Thyroid gland (tissue), 4 donors: ENCODE measurements at regions of chr2 and their contacts with region 1.

Region 1: GRCh38 chr2:10434886-10435819 is 13.0 kb downstream of the ODC1 start:
- DNase-seq: peak; percentile 70
- H3K4me3 ChIP-seq: no peak overlapping the region
- H3K27ac ChIP-seq: no peak overlapping the region
- H3K4me1 ChIP-seq: peaks cover 5 to 10% of the 10 kb centered on the region in 2 donors
- H3K27me3 ChIP-seq: no peaks in the 10 kb centered on the region
- CTCF ChIP-seq: peak; percentile 88 to 98 (median 94)
- POLR2A ChIP-seq: no peak

Region 2: GRCh38 chr2:9799665-9800632 is 635.2 kb before region 1 on chr2:
- intact Hi-C with region 1: loop called (anchors 10 kb)
- DNase-seq: peak; percentile 81 to 84
- H3K4me3 ChIP-seq: no peak overlapping the region
- H3K27ac ChIP-seq: peak overlapping the region in 1 of 3 donors; percentile 63
- H3K4me1 ChIP-seq: peaks cover 0 to 4% of the 10 kb centered on the region in 2 donors
- H3K27me3 ChIP-seq: no peaks in the 10 kb centered on the region
- CTCF ChIP-seq: peak; percentile 90 to 98 (median 94)
- POLR2A ChIP-seq: no peak

Region 3: GRCh38 chr2:10072656-10073480 is 362.3 kb before region 1 on chr2:
- intact Hi-C with region 1: loop called (anchors 5 kb)
- DNase-seq: peak; percentile 80 to 85
- H3K4me3 ChIP-seq: no peak overlapping the region
- H3K27ac ChIP-seq: no peak overlapping the region
- H3K4me1 ChIP-seq: peaks cover 0 to 10% of the 10 kb centered on the region in 2 donors
- H3K27me3 ChIP-seq: no peaks in the 10 kb centered on the region
- CTCF ChIP-seq: peak; percentile 54 to 89 (median 84)
- POLR2A ChIP-seq: no peak

Region 4: DNA sequence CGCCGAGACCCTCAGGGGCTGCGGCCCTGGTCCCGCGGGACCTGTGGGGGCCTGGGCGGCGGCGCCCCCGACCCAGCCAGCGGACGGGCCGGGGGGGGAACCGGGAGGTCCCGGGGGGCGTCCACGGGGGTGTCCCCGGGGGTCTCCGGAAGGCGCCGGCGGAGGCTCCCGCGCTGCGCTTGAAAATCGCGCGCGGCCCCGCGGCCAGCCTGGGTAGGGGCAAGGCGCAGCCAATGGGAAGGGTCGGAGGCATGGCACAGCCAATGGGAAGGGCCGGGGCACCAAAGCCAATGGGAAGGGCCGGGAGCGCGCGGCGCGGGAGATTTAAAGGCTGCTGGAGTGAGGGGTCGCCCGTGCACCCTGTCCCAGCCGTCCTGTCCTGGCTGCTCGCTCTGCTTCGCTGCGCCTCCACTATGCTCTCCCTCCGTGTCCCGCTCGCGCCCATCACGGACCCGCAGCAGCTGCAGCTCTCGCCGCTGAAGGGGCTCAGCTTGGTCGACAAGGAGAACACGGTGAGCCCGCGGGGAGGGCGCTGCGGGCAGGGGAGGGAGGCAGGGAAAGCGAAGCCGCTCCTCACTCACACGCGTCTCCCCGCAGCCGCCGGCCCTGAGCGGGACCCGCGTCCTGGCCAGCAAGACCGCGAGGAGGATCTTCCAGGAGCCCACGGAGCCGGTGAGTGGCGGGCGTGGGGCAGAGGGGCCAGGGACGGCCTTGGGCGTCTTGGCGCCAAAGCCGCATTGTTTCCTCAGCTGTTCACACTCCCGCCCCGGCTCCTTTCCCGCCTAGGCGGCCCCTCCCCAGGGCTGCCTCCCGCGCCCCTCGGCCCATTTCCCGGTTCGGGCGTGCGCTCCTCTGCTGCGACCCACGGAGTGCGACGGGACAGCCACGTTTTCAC is 312.5 kb before region 1 on chr2 and contains the start of gene RRM2:
- intact Hi-C with region 1: loop called (anchors 2 kb)
- DNase-seq: peak; percentile 91 to 92
- H3K4me3 ChIP-seq: peak within 1 kb of the TSS in 1 of 3 donors; percentile 43
- H3K27ac ChIP-seq: no peak within 1 kb of the TSS
- H3K4me1 ChIP-seq: peaks cover 14 to 23% of the 10 kb centered on the region in 2 donors
- H3K27me3 ChIP-seq: peaks cover 7% of the 10 kb centered on the region
- CTCF ChIP-seq: no peak
- POLR2A ChIP-seq: no peak
- total RNA-seq, gene RRM2: 0.27 to 0.83 (median 0.75) TPM in 3 of 4 donors, not detected in the other

Region 5: GRCh38 chr2:10141736-10142642 is 293.2 kb before region 1 on chr2:
- intact Hi-C with region 1: loop called (anchors 5 kb)
- DNase-seq: peak; percentile 29 to 34
- H3K4me3 ChIP-seq: no peak overlapping the region
- H3K27ac ChIP-seq: no peak overlapping the region
- H3K4me1 ChIP-seq: no peaks in the 10 kb centered on the region
- H3K27me3 ChIP-seq: no peaks in the 10 kb centered on the region
- CTCF ChIP-seq: peak in 4 of 6 experiments; percentile 53 to 63 (median 60)
- POLR2A ChIP-seq: no peak

Region 6: DNA sequence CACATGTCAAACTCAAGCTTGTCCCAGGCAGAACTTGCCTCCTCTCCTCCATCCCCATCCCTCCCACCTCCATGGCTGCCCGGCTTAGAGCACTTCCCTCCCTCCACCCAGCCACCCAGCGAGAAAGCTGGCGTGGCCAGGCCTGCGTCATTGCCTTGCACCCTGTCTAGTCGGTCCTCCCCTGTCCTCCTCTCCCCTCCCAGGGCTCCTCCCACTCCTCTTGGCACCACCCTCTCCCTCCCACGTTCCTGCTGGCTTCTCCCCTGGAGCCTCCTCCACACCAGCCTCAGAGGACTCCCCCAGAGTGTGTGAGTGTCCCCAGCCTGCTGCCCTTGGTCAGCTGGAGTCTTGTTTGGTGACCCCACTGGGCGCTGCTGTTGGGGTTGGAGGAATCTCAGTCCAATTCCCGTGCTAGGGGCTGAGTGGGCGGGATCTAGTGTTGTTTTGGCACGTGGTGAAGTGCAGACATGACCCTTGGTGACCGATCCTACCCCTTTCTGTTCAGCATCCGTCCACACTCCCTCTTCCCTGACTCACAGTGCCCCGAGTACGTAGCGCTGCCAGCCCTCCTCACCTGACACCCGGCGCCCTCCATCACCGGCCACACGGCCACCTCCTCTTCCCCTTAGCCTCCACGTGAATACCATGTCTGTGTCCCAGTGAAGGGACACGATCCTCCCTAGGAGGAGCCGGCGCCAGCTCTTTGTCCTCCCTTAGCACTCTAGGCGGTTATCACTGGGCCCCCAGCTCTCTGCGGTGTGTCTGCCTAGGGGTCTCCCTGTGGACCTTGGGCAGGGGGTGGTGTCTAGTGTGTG is 327.7 kb after region 1 on chr2:
- intact Hi-C with region 1: no loop called
- DNase-seq: no peak
- H3K4me3 ChIP-seq: no peak overlapping the region
- H3K27ac ChIP-seq: no peak overlapping the region
- H3K4me1 ChIP-seq: no peaks in the 10 kb centered on the region
- H3K27me3 ChIP-seq: no peaks in the 10 kb centered on the region
- CTCF ChIP-seq: no peak
- POLR2A ChIP-seq: no peak